HCT116 (cell line): ENCODE measurements at regions of chr12 and their contacts with region 1.

Region 1: DNA sequence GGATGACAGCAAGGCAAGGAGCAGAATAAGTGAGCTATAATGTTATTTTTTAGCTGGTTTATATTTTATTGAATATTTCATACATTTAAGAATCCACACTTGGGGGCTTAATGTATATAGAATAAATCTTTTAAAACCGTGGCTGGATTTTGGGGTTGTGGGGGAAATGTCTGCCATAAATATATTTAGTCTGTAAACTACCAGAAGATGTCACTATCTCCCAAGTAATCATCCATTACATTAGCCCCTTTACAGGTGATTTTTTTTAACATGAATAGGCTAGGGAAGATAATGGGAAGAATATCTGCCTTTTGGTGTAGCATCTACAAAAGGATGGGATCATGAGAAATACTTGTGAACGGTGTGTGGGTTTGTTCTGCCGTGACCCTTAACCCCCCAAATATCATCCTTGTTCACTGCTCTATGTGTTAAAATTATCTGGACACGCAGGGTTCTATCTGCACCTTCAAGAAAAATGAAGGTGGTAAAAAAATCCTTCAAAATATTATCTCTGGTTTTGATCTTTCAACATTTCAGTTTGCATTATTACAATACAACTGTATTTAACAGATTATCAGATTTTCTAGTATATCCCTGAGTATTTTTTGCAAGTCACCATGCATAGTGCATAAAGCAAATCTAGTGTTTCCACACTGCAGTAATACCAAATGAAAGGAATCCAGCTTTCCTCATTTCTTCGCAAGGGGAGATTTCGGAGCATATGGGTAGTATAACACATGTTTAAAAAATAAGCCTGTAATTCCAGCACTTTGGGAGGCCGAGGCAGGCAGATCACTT is 8.0 kb upstream of the SLC17A8 start:
- DNase-seq: peak; percentile 33
- ATAC-seq: peak; percentile 76
- H3K4me3 ChIP-seq: no peak overlapping the region
- H3K27ac ChIP-seq: no peak overlapping the region
- H3K4me1 ChIP-seq: no peaks in the 10 kb centered on the region
- H3K27me3 ChIP-seq: peaks cover 3% of the 10 kb centered on the region; the same call in 1 of the 2 replicates
- CTCF ChIP-seq: peak; percentile 16 to 80 (median 57); a peak in 4 of 6 replicates
- POLR2A ChIP-seq: no peak
- RAD21 ChIP-seq: peak; percentile 81

Region 2: GRCh38 chr12:100128512-100128908 is 220.3 kb before region 1 on chr12:
- CTCF ChIA-PET with region 1: no interaction called
- POLR2A ChIA-PET with region 1: no interaction called
- RAD21 ChIA-PET with region 1: no interaction called
- intact Hi-C with region 1: no loop called
- DNase-seq: no peak
- ATAC-seq: peak; percentile 79
- H3K4me3 ChIP-seq: no peak overlapping the region
- H3K27ac ChIP-seq: no peak overlapping the region
- H3K4me1 ChIP-seq: 0 out of 4 replicates have a peak, but pooled peaks cover 0 to 3% of the 10 kb centered on the region in 2 experiments
- H3K27me3 ChIP-seq: no peaks in the 10 kb centered on the region
- CTCF ChIP-seq: peak; percentile 15 to 54 (median 49); a peak in 5 of 6 replicates
- POLR2A ChIP-seq: no peak
- RAD21 ChIP-seq: peak; percentile 28; the same call in 1 of the 2 replicates

Region 3: GRCh38 chr12:100311317-100311716 is 37.5 kb before region 1 on chr12:
- CTCF ChIA-PET with region 1: no interaction called
- POLR2A ChIA-PET with region 1: no interaction called
- RAD21 ChIA-PET with region 1: no interaction called
- intact Hi-C with region 1: no loop called
- DNase-seq: no peak
- ATAC-seq: no peak
- H3K4me3 ChIP-seq: no peak overlapping the region
- H3K27ac ChIP-seq: no peak overlapping the region
- H3K4me1 ChIP-seq: no peaks in the 10 kb centered on the region
- H3K27me3 ChIP-seq: no peaks in the 10 kb centered on the region
- CTCF ChIP-seq: no peak
- POLR2A ChIP-seq: no peak
- RAD21 ChIP-seq: no peak

Region 4: GRCh38 chr12:100733817-100734593 is 385.1 kb after region 1 on chr12:
- CTCF ChIA-PET with region 1: interaction called, 6 read pairs
- POLR2A ChIA-PET with region 1: no interaction called
- RAD21 ChIA-PET with region 1: no interaction called
- intact Hi-C with region 1: loop called (anchors 1 kb)
- DNase-seq: peak; percentile 21
- ATAC-seq: peak; percentile 67
- H3K4me3 ChIP-seq: no peak overlapping the region
- H3K27ac ChIP-seq: no peak overlapping the region
- H3K4me1 ChIP-seq: no peaks in the 10 kb centered on the region
- H3K27me3 ChIP-seq: no peaks in the 10 kb centered on the region
- CTCF ChIP-seq: peak; percentile 57 to 62 (median 58); a peak in 5 of 6 replicates
- POLR2A ChIP-seq: no peak
- RAD21 ChIP-seq: peak; percentile 62